ENCODE measurements at regions of chr14 and their contacts with region 1.

Region 1: DNA sequence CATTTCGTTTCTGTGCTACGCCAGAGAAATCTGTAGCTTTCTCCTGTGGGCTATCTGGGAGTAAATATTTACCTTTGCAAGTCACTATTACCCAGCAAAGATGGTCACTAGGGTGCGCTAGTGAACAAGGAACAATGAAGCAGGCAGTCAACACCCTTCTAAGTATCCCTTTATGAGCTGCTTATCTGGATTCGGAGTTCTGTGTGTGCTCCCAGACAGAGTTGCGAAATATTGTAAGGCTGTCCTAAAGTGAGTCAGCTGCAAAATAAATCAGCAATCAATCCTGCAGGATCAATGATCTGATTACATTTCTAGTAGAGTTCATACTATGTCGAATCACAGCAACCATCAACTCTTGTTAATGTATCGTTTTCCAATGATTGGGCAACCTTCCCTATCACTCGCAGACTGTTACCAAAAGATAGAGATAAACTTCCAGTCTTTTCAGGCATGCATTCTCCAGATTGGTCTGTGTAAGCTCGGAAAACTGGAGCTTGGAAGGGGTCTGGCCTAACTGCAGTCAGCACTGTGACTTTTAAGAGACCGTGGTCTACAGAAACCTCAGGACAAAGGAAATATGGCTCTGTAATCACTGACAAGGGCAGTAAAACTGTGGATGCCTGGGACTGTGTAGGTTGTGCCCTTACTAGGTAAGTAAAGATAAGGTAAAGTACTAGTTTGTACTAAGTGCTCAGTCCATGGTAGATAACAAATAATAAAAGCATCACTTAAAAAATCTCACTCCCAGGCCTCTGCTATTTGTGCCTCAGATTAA is 133.5 kb downstream of the KCNK10 start:
- DNase-seq: peak; percentile 64
- H3K4me3 ChIP-seq: no peak overlapping the region
- CTCF ChIP-seq: peak; percentile 48

Region 2: GRCh38 chr14:88380405-88380804 is 190.8 kb after region 1 on chr14:
- CTCF ChIA-PET with region 1: interaction called, 26 read pairs
- POLR2A ChIA-PET with region 1: no interaction called
- DNase-seq: no peak
- H3K4me3 ChIP-seq: no peak overlapping the region
- CTCF ChIP-seq: no peak

Region 3: GRCh38 chr14:88562831-88563686 is 373.5 kb after region 1 on chr14 and contains the start of gene ZC3H14:
- CTCF ChIA-PET with region 1: interaction called, 30 read pairs
- POLR2A ChIA-PET with region 1: no interaction called
- DNase-seq: no peak
- H3K4me3 ChIP-seq: peak within 1 kb of the TSS; percentile 90
- CTCF ChIP-seq: no peak

Measured in AG04449 (cell line).